Left lung (tissue), 14 donors: ENCODE measurements at regions of chr7 and their contacts with region 1.

Region 1: DNA sequence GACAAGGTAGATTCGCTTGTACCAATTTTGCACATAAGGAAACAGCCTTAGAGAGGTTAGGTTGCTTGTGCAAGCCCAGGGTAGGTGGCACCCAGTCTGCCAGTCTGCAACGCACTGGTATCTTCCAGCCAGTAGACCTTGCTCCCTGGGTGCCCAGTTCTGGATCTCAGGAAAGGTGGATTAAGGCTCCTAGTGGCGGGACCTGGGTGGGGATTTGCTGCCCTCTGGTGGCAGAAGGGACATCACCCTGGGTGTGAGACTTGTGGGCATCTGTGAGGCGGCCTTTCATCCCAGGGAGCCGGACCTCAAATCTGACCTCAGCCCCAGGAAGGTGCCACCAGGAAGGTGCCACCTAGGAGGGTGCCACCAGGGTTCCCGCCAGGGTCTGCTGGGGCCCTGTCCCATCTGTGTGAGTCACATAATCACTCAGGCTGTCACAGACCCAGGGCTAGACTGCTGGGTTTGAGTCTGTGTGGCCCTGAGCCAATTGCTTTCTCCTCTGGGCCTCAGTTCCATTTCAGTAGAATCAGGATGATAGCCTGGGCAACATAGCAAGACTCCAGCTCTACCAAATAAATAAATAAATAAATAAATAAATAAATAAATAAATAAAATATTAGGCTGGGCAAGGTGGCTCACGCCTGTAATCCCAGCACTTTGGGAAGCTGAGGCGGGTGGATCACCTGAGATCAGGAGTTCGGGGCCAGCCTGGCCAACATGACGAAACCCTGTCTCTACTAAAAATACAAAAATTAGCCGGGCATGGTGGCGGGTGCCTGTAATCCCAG is 5.3 kb upstream of the PRKRIP1 start:
- DNase-seq: peak; percentile 59 to 91 (median 81)
- ATAC-seq: peak; percentile 92
- H3K4me3 ChIP-seq: no peak overlapping the region
- H3K27ac ChIP-seq: no peak overlapping the region
- H3K4me1 ChIP-seq: peaks cover 0 to 7% of the 10 kb centered on the region in 2 donors
- H3K27me3 ChIP-seq: no peaks in the 10 kb centered on the region
- CTCF ChIP-seq: peak; percentile 91 to 92

Region 2: GRCh38 chr7:102279537-102280400 is 111.1 kb before region 1 on chr7:
- intact Hi-C with region 1: loop called in 1 of 2 experiments (anchors 2 kb)
- DNase-seq: peak; percentile 54 to 84 (median 70)
- ATAC-seq: peak; percentile 85
- H3K4me3 ChIP-seq: no peak overlapping the region
- H3K27ac ChIP-seq: no peak overlapping the region
- H3K4me1 ChIP-seq: peaks cover 0 to 14% of the 10 kb centered on the region in 2 donors
- H3K27me3 ChIP-seq: no peaks in the 10 kb centered on the region
- CTCF ChIP-seq: peak; percentile 83 to 85